ENCODE measurements at regions of chr9 and their contacts with region 1.

Region 1: DNA sequence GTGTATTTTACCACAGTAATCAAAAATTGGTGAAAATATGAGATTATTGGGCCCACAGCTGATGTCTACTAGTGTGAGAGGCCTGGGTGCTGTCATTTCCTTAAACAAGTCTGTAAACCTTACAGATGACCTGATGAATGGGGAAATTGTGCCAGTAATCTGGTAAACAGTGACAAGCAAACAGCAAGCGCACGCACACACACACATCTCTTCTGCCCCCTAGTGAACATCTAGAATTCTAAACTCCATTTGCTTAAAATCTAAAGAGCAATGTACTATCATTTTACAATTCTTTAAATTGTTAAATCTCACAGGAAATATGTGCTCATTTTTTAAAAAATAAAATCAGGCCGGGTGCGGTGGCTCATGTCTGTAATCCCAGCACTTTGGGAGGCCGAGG is 7.5 kb upstream of the RAPGEF1 start:
- DNase-seq: peak; percentile 77
- ATAC-seq: peak; percentile 46
- H3K4me3 ChIP-seq: no peak overlapping the region
- H3K27ac ChIP-seq: no peak overlapping the region
- H3K4me1 ChIP-seq: peaks cover 24% of the 10 kb centered on the region
- H3K27me3 ChIP-seq: peaks cover 1 to 8% of the 10 kb centered on the region in 2 experiments; a peak in 1 of 5 replicates
- CTCF ChIP-seq: peak; percentile 75
- EP300 ChIP-seq: no peak
- POLR2A ChIP-seq: no peak
- RAD21 ChIP-seq: peak; percentile 68

Region 2: GRCh38 chr9:131590908-131591844 is 156.2 kb before region 1 on chr9:
- CTCF ChIA-PET with region 1: interaction called, 185 read pairs
- POLR2A ChIA-PET with region 1: no interaction called
- in situ Hi-C with region 1: loop called (anchors 5 kb)
- intact Hi-C with region 1: loop called (anchors 1 kb)
- DNase-seq: peak; percentile 61
- ATAC-seq: peak; percentile 94
- H3K4me3 ChIP-seq: no peak overlapping the region
- H3K27ac ChIP-seq: no peak overlapping the region
- H3K4me1 ChIP-seq: peaks cover 14% of the 10 kb centered on the region
- H3K27me3 ChIP-seq: no peaks in the 10 kb centered on the region
- CTCF ChIP-seq: peak; percentile 97
- EP300 ChIP-seq: no peak
- POLR2A ChIP-seq: no peak
- RAD21 ChIP-seq: peak; percentile 96